ENCODE measurements at regions of chr10 and their contacts with region 1.

Region 1: GRCh38 chr10:94320285-94320914 is 42.3 kb downstream of the NOC3L start:
- DNase-seq: peak; percentile 41 to 83
- H3K4me3 ChIP-seq: no peak overlapping the region
- H3K27ac ChIP-seq: no peak overlapping the region
- H3K4me1 ChIP-seq: peaks cover 0 to 2% (median 0%) of the 10 kb centered on the region in 4 experiments; a peak in 1 of 7 replicates
- H3K27me3 ChIP-seq: no peaks in the 10 kb centered on the region
- CTCF ChIP-seq: peak; percentile 33 to 79 (median 68)
- EP300 ChIP-seq: no peak
- POLR2A ChIP-seq: no peak
- RAD21 ChIP-seq: peak; percentile 83

Region 2: GRCh38 chr10:93916257-93917063 is 403.9 kb before region 1 on chr10:
- CTCF ChIA-PET with region 1: interaction called, 31 read pairs
- POLR2A ChIA-PET with region 1: interaction called, 3 read pairs
- DNase-seq: no peak
- H3K4me3 ChIP-seq: peak overlapping the region in 1 of 4 experiments; percentile 3; a peak in 2 of 8 replicates
- H3K27ac ChIP-seq: no peak overlapping the region
- H3K4me1 ChIP-seq: peaks cover 0 to 2% (median 0%) of the 10 kb centered on the region in 4 experiments; a peak in 1 of 7 replicates
- H3K27me3 ChIP-seq: no peaks in the 10 kb centered on the region
- CTCF ChIP-seq: peak in 2 of 3 experiments; percentile 34 to 58; a peak in 2 of 4 replicates
- EP300 ChIP-seq: no peak
- POLR2A ChIP-seq: no peak
- RAD21 ChIP-seq: peak; percentile 56 to 62

Region 3: DNA sequence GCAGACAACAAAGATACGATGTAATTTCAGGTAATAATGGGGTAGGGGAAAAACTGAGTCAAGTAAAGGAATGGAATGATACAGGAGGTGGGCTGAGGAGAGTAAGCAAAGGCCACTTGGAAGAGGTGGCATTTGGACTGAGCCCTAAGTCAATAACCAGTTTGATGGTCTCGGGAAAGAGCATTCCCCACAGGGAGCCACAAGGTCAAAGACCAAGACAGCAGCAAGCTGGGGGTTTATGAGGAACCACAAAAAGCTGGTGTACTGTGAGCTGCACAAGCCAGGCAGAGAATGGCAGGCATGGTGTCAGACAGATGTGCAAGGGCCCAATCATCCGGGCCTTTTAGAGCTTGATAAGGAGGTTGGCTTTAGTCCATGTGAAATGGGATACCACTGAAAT is 56.3 kb before region 1 on chr10:
- CTCF ChIA-PET with region 1: interaction called, 10 read pairs
- POLR2A ChIA-PET with region 1: no interaction called
- DNase-seq: no peak
- H3K4me3 ChIP-seq: no peak overlapping the region
- H3K27ac ChIP-seq: no peak overlapping the region
- H3K4me1 ChIP-seq: no peaks in the 10 kb centered on the region
- H3K27me3 ChIP-seq: no peaks in the 10 kb centered on the region
- CTCF ChIP-seq: no peak
- EP300 ChIP-seq: no peak
- POLR2A ChIP-seq: no peak
- RAD21 ChIP-seq: no peak

Region 4: DNA sequence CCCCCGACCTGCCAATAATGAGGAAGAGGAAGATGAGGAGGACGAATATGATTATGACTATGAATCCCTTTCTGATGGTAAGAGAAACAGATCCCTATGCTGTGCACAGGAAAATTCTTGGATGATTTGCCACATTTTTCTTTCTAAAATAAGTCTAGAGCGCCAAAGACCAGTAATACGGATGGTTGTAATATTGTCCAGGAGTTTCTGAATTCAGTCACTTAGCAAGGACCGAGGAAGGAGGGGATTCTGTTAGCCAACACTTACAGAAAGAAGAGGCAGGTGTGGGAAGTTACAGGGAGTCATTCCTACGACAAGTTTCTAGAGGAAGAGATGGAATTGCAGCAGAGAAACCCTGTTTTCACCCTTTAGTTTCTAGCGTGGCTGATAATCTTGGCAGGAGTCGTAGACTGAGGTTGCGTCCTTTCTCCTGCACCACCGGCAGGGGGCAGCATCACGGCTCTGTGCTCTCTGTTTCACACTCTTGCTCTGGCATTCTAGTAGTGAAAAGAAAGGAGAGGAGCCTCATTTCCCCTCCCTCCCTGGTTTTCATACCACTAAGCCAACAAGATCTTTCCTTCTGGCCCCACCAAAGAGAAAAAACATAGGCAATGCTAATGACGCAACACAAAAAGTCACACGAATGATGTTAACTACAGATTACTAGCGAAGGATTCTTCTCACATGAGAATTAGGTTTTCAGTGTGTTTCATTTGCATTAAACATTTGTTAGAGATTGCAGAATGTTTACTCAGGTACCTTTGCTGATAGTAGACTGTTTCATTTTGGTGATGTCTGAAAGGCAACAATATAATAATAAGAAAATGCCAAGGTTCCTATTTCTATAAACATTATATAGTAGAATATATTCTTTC is 40.3 kb before region 1 on chr10:
- CTCF ChIA-PET with region 1: interaction called, 17 read pairs
- POLR2A ChIA-PET with region 1: no interaction called
- DNase-seq: peak; percentile 62 to 89
- H3K4me3 ChIP-seq: no peak overlapping the region
- H3K27ac ChIP-seq: no peak overlapping the region
- H3K4me1 ChIP-seq: no peaks in the 10 kb centered on the region
- H3K27me3 ChIP-seq: no peaks in the 10 kb centered on the region; a peak in 1 of 7 replicates
- CTCF ChIP-seq: peak; percentile 88 to 95 (median 88)
- EP300 ChIP-seq: no peak
- POLR2A ChIP-seq: no peak
- RAD21 ChIP-seq: peak; percentile 75 to 79

Region 5: GRCh38 chr10:94288361-94289108 is 31.9 kb before region 1 on chr10:
- CTCF ChIA-PET with region 1: interaction called, 17 read pairs
- POLR2A ChIA-PET with region 1: interaction called, 3 read pairs
- DNase-seq: no peak
- H3K4me3 ChIP-seq: peak overlapping the region in 2 of 4 experiments; percentile 2 to 16; a peak in 2 of 8 replicates
- H3K27ac ChIP-seq: no peak overlapping the region
- H3K4me1 ChIP-seq: peaks cover 0 to 8% (median 6%) of the 10 kb centered on the region in 4 experiments; a peak in 4 of 7 replicates
- H3K27me3 ChIP-seq: no peaks in the 10 kb centered on the region
- CTCF ChIP-seq: no peak
- EP300 ChIP-seq: no peak
- POLR2A ChIP-seq: no peak
- RAD21 ChIP-seq: no peak

Region 6: GRCh38 chr10:94308866-94309265 is 11.5 kb before region 1 on chr10:
- CTCF ChIA-PET with region 1: interaction called, 48 read pairs
- POLR2A ChIA-PET with region 1: interaction called, 4 read pairs
- DNase-seq: no peak
- H3K4me3 ChIP-seq: no peak overlapping the region
- H3K27ac ChIP-seq: no peak overlapping the region
- H3K4me1 ChIP-seq: no peaks in the 10 kb centered on the region
- H3K27me3 ChIP-seq: no peaks in the 10 kb centered on the region
- CTCF ChIP-seq: no peak
- EP300 ChIP-seq: no peak
- POLR2A ChIP-seq: no peak
- RAD21 ChIP-seq: no peak

Region 7: DNA sequence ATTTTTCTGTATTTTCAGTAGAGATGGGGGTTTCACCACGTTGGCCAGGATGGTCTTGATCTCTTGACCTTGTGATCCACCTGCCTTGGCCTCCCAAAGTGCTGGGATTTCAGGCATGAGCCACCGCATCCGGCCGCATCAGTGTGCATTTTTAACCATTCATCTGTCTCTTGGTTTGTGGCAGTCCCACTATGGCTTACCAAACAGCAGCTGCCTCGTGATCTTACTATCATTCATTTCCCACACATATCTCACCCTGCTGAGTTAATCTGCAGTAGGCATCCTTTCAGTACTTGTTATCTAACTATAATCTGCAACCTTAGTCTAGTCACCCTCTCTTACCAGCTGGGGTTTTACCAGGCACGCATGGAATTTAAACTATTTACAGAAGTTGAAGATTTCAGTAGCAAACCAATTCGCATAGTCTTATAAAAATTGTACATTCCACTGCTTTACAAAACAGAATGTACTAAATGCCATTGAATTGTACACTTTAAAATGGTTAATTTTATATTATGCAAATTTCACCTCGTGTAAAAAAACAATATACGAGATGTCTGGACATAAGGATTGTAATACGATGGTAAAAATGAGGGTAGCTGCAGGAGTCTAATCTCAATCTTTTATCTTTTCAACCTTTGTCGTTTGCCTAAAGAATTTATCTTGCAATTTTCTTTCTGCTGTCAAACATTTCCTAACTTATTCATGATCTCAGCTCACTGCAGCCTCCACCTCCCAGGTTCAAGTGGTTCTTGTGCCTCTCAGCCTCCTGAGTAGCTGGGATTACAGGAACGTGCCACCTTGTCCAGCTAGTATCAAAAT is 77.4 kb after region 1 on chr10:
- CTCF ChIA-PET with region 1: no interaction called
- POLR2A ChIA-PET with region 1: no interaction called
- DNase-seq: no peak
- H3K4me3 ChIP-seq: no peak overlapping the region
- H3K27ac ChIP-seq: no peak overlapping the region
- H3K4me1 ChIP-seq: 0 out of 7 replicates have a peak, but pooled peaks cover 0 to 2% (median 0%) of the 10 kb centered on the region in 4 experiments
- H3K27me3 ChIP-seq: no peaks in the 10 kb centered on the region; a peak in 1 of 7 replicates
- CTCF ChIP-seq: no peak
- EP300 ChIP-seq: no peak
- POLR2A ChIP-seq: no peak
- RAD21 ChIP-seq: no peak

Region 8: GRCh38 chr10:94443047-94443446 is 122.6 kb after region 1 on chr10:
- CTCF ChIA-PET with region 1: interaction called, 16 read pairs
- POLR2A ChIA-PET with region 1: interaction called, 3 read pairs
- DNase-seq: no peak
- H3K4me3 ChIP-seq: no peak overlapping the region
- H3K27ac ChIP-seq: no peak overlapping the region
- H3K4me1 ChIP-seq: no peaks in the 10 kb centered on the region
- H3K27me3 ChIP-seq: no peaks in the 10 kb centered on the region
- CTCF ChIP-seq: no peak
- EP300 ChIP-seq: no peak
- POLR2A ChIP-seq: no peak
- RAD21 ChIP-seq: no peak

Region 9: GRCh38 chr10:94630017-94630688 is 309.8 kb after region 1 on chr10:
- CTCF ChIA-PET with region 1: no interaction called
- POLR2A ChIA-PET with region 1: no interaction called
- DNase-seq: no peak
- H3K4me3 ChIP-seq: no peak overlapping the region
- H3K27ac ChIP-seq: no peak overlapping the region
- H3K4me1 ChIP-seq: peaks cover 0 to 5% (median 1%) of the 10 kb centered on the region in 4 experiments; a peak in 3 of 7 replicates
- H3K27me3 ChIP-seq: no peaks in the 10 kb centered on the region
- CTCF ChIP-seq: peak in 2 of 3 experiments; percentile 32 to 43; a peak in 2 of 4 replicates
- EP300 ChIP-seq: no peak
- POLR2A ChIP-seq: no peak
- RAD21 ChIP-seq: peak; percentile 70 to 77

Measured in H1 (cell line).